AG04449 (cell line): ENCODE measurements at regions of chr21 and their contacts with region 1.

Region 1: DNA sequence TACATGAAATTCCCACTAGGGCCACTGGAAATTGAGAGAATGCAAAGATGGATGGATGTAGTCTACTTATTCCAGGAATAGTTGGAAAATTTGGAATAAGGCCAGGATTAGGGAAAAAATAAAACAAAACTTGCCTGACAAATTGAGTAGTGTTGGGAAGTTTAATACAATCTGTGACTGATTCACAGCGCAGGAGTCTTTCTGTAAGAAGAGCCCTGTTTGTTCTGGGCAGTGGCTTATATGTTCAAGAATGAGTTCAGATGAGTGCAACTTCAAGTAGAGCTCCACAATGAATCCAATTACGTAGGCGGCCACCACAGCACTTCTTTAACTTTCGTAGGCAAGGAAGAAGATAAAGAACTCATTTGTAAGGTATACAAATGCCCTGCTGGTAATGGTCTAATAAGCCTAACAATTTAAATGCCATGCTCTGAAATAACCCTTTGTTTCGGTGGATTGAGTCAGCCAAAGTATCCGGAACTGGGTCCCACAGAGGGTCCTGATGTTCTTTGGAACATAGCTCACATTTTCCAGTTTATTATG is 47.1 kb upstream of the KCNE1 start:
- DNase-seq: no peak
- H3K4me3 ChIP-seq: no peak overlapping the region
- CTCF ChIP-seq: no peak

Region 2: DNA sequence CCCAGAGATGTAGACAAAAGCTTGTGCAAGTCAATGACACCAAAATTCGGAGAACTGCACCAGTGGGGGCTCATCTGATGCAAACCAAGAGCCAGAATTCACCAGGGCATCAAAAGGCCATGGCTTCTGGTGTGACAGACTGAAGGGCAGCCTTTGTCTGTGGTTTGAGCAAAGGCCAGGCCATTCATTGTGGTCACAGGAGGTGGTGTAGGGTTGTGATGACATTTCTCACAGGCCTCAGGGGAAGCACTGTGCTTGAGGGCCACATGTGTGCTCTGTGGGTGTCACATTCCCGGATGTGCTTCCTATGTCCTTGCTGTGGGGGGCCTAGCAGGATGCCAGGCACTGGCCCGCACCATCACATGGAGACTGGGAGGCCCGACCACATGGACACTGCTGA is 24.6 kb before region 1 on chr21:
- CTCF ChIA-PET with region 1: no interaction called
- POLR2A ChIA-PET with region 1: no interaction called
- DNase-seq: no peak
- H3K4me3 ChIP-seq: no peak overlapping the region
- CTCF ChIP-seq: no peak

Region 3: DNA sequence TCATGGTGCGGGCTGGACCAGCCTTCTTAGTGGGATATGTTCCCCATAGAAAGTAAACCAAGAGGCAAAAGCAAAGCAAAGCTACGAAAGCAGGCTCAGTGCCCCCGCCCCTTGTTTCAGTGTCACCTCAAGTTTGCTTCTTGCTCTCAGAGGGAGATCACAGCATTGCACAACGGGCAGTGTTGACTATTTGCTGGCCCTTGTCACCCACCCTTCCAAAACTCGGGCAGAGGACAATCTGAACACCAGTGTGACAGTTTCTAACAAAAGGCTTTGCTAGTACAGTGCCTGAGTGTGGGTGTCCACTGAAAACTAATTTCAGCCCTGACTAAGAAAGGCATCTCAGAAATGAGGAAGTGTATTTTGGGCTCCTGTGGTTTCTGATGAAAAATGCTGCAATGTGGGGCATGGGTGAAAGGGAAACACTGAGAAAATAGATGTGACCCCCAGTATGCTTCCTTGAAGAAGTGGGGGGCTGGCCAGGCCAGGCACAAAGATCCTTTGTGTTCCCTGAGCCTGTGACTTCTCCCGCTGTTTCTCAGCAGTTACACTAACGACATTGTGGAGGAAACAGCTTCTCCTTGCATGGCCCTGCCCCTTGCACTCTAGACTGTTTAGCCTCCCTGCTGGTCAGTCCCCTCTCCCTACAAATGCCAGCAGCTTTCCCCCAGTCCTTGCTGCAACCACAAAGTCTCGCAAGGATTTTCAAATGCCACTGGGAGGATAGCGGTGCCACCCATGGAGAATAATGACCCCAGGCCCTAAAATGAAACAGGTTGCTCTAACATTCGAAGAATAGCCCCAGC is 13.9 kb before region 1 on chr21:
- CTCF ChIA-PET with region 1: interaction called, 17 read pairs
- POLR2A ChIA-PET with region 1: no interaction called
- DNase-seq: no peak
- H3K4me3 ChIP-seq: no peak overlapping the region
- CTCF ChIP-seq: no peak